Activated T-helper 1 cell treated with anti-CD3 and anti-CD28 coated beads, Interleukin-12 subunit alpha, Interleukin-12 subunit beta, Interleukin-2, Interleukin-4 antibody, amounts not matched to agents 30 ng/mL and 10 ng/mL and 1 ng/mL, durations not matched to agents 14 hours and 24 hours and 36 hours (primary cell): ENCODE measurements at regions of chr12 and their contacts with region 1.

Region 1: DNA sequence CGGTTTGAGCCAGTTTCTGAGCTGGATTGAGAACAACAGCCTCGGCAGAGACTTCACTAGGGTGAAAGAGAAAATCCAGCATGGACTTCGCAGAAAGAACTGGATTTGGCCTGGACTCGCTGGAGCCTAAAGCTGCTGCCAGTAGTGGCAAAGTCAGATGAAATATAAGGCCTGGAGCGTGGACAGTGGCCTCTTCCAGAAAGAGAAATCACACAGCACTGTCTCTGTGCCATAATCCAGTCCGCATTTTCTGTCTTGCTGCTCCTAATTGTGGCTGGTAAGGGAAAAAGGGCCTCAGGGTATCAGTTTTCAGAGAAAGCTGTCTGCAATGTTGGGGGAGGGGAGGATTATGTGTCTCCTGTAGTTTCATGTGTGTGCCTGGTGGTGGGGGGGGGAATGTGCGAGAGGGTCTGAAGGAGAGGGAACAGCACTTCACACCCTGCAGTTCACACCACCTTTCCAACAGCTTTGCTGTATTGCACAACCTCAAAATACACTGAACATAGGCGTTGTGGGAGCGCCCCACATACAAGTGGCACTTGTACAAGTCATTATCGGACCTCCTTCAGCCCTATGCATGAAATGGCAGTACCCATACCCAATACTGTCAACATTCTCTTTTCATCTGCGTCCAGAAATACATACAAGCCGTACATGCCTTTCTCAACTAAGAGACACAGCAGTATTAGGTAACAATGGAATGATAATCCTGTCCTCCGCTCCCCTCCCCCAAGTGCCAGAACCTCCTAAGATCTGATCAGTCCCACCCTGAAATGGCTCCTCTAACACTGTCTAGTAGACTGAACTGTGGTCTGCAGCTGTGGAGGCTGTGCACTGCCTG is 107.5 kb upstream of the ATF7IP start:
- DNase-seq: peak; percentile 87
- H3K4me3 Mint-ChIP-seq: peak overlapping the region; percentile 76
- H3K27ac Mint-ChIP-seq: peak overlapping the region; percentile 95
- H3K4me1 Mint-ChIP-seq: peaks cover 53% of the 10 kb centered on the region
- H3K27me3 Mint-ChIP-seq: no peaks in the 10 kb centered on the region

Region 2: GRCh38 chr12:14216405-14217294 is 41.3 kb before region 1 on chr12:
- intact Hi-C with region 1: loop called (anchors 1 kb)
- DNase-seq: no peak
- H3K4me3 Mint-ChIP-seq: peak overlapping the region; percentile 0
- H3K27ac Mint-ChIP-seq: no peak overlapping the region
- H3K4me1 Mint-ChIP-seq: peaks cover 15% of the 10 kb centered on the region
- H3K27me3 Mint-ChIP-seq: no peaks in the 10 kb centered on the region

Region 3: DNA sequence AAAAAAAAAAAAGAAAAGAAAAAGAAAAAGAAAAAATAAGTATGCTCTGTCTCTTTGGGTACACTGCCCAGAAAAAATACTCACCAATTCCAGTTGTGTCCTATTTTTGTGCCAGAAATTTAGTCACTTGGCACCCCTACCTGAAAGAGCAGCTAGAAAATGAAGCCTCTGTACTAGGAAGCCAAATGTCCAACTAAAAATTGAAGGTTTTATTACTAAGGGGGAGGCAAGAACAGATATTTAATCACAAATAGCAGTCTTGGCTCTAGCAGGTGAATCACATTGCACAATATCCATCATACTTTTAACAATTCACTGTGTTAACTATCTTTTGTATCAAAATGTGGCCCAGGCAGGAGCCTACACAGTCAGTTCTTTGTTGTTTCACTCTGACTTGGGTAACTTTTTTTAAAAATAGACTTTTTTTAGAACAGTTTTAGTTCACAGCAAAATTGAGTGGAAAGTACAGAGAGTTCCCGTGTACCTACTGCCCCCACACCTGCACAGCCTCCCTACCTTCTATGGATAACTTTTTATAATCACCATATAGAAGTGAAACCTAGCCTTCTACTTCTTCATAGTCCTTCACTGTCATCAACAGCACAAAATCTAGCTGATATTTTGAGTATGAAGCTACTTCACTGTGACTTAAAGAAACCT is 20.5 kb after region 1 on chr12:
- intact Hi-C with region 1: loop called (anchors 2 kb)
- DNase-seq: no peak
- H3K4me3 Mint-ChIP-seq: no peak overlapping the region
- H3K27ac Mint-ChIP-seq: no peak overlapping the region
- H3K4me1 Mint-ChIP-seq: peaks cover 10% of the 10 kb centered on the region
- H3K27me3 Mint-ChIP-seq: no peaks in the 10 kb centered on the region

Region 4: DNA sequence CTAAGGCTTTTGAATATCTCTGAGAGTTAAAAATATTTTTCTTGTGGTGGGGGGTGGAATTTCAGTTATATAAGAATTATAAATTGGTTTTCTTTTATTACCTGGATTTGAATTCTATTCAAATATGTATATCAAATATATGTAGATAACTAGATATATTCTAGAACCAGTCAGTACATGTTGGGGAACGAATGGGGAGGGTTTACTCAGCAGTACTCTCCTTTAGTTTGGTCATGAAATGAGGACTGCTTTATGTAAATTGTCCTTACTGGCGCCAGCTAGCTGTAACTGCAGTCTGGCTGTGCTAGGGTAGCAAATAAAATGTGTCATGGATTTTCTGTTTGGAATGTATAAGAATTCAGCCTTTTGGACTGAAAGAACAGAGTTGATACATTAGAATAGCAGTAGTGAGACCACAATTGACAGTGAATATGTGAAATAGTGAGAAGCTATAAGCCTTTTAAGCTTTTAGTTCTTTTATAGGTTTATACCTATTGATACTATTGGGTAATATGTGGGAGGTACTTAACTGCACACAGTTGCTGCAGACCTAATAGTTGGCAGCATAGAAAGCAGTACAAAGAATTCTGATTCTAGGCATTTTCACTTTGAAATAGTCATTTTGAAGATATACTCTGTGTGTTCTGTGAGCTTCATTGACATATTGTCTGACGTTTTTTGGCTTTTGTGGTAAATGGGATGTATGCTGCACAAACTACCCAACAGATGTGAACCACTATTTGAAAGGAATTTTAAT is 136.5 kb after region 1 on chr12:
- intact Hi-C with region 1: loop called (anchors 1 kb)
- DNase-seq: peak; percentile 38
- H3K4me3 Mint-ChIP-seq: peak overlapping the region; percentile 64
- H3K27ac Mint-ChIP-seq: peak overlapping the region; percentile 89
- H3K4me1 Mint-ChIP-seq: peaks cover 87% of the 10 kb centered on the region
- H3K27me3 Mint-ChIP-seq: no peaks in the 10 kb centered on the region

Region 5: DNA sequence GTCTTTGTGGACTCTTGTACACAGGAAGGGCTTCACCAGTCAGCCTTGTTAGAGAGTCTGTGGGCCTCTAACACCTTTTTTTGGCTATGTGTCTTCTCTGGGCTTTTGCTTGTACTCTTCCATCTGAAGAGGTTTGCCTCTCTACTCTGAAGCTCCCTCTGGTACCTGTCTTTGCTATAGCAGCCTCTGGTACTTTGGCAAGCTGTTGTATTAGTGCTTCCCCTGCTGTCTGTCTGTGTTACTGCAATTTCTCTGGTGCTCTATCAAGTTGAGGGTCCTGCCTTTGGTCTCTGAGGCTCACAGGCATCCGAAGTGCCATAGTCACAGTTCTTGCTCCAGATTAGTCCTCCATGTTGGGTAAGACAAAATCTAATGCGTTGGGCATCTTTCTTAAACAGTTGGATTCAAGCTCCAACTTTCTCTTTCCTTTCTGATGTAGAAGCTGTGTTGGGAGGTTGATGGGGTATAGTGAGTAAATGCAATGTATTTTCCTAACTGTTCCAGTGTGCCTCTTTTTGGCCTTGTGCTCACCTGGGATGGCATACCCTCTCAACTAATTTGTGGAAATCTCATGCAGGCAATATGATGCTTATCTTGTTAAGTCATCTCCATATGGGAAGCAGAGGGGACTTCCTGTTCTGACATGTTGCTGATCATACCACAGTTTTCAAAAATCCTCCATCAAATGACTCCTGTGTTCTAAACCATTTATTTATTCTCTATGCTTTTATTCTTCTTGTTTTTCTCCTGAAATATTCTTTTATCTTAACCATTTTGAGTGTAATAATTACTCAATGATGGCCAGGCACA is 196.3 kb after region 1 on chr12:
- intact Hi-C with region 1: loop called (anchors 1 kb)
- DNase-seq: peak; percentile 34
- H3K4me3 Mint-ChIP-seq: peak overlapping the region; percentile 46
- H3K27ac Mint-ChIP-seq: peak overlapping the region; percentile 84
- H3K4me1 Mint-ChIP-seq: peaks cover 54% of the 10 kb centered on the region
- H3K27me3 Mint-ChIP-seq: no peaks in the 10 kb centered on the region

Region 6: GRCh38 chr12:14948672-14949071 is 690.7 kb after region 1 on chr12:
- intact Hi-C with region 1: loop called (anchors 5 kb)
- DNase-seq: peak; percentile 49
- H3K4me3 Mint-ChIP-seq: peak overlapping the region; percentile 79
- H3K27ac Mint-ChIP-seq: peak overlapping the region; percentile 99
- H3K4me1 Mint-ChIP-seq: peaks cover 90% of the 10 kb centered on the region
- H3K27me3 Mint-ChIP-seq: no peaks in the 10 kb centered on the region

Region 7: DNA sequence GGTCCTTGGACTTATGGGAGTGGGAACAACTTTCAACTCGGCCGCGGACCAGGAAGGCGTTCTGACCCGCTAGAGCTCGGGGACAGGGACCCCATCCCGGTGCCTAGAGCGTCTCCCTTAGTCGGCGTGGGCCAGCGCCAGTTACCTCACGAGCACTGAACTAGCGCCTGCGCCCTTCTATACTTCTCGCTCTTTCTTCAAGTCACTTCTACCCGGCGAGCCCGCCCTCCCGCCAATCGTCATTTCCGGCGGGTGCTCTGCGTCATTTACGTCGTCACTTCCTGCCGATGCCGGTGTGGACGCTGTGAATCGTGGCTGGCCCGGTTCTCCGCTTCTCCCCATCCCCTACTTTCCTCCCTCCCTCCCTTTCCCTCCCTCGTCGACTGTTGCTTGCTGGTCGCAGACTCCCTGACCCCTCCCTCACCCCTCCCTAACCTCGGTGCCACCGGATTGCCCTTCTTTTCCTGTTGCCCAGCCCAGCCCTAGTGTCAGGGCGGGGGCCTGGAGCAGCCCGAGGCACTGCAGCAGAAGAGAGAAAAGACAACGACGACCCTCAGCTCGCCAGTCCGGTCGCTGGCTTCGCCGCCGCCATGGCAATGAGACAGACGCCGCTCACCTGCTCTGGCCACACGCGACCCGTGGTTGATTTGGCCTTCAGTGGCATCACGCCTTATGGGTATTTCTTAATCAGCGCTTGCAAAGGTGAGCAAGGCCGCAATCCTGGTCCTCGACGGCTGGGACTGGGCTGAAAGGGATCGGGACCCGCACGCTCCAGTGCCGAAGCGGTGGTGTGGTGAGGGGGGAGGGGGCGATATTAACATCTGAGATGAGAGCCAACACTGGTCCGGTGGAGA is 1624.4 kb after region 1 on chr12 and contains the start of gene STRAP:
- intact Hi-C with region 1: loop called (anchors 5 kb)
- DNase-seq: peak; percentile 94
- H3K4me3 Mint-ChIP-seq: peak within 1 kb of the TSS; percentile 97
- H3K27ac Mint-ChIP-seq: peak within 1 kb of the TSS; percentile 99
- H3K4me1 Mint-ChIP-seq: peaks cover 59% of the 10 kb centered on the region
- H3K27me3 Mint-ChIP-seq: no peaks in the 10 kb centered on the region
- total RNA-seq, gene STRAP: 147 and 156 TPM in 2 replicates